ENCODE measurements at regions of chr19 and their contacts with region 1.

Region 1: DNA sequence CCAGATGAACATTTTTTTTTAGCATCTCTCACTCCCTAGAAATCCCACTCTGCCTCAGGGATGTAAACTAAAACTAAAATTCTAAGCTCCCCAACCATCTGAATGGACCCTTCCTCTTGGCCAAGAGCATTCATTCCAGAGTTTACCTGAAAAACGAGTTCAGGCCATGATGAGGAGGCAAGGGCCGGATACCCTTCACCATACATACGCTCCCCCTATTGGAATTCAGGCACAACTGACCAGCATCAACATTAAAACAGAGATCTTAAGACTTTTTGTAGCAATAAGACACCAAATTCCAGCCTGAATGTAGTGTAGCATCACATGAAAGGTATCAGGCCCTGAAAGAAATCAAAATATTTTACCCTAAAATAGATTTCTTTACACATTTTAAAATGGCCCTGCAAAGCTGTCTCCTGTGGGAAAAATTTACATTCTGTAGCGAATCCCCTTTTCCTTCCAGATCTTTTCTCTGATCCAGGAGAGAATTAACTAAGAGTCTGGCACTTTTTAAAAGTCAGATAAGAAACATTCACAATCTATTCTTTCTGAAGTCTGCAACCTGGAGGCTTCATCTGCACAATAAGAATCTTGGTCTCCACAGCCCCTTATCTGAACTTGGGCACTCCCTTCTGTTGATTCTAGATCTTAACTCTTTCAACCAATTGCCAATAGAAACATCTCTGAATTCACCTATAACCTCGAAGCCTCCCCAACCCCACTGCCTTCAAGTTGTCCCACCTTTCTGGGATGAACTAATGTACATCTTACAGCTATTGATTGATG is 888.5 kb downstream of the UQCRFS1 start:
- DNase-seq: no peak
- H3K4me3 ChIP-seq: no peak overlapping the region
- H3K27ac ChIP-seq: no peak overlapping the region
- H3K4me1 ChIP-seq: no peaks in the 10 kb centered on the region
- H3K27me3 ChIP-seq: no peaks in the 10 kb centered on the region
- CTCF ChIP-seq: peak in 1 of 2 donors; percentile 4

Region 2: DNA sequence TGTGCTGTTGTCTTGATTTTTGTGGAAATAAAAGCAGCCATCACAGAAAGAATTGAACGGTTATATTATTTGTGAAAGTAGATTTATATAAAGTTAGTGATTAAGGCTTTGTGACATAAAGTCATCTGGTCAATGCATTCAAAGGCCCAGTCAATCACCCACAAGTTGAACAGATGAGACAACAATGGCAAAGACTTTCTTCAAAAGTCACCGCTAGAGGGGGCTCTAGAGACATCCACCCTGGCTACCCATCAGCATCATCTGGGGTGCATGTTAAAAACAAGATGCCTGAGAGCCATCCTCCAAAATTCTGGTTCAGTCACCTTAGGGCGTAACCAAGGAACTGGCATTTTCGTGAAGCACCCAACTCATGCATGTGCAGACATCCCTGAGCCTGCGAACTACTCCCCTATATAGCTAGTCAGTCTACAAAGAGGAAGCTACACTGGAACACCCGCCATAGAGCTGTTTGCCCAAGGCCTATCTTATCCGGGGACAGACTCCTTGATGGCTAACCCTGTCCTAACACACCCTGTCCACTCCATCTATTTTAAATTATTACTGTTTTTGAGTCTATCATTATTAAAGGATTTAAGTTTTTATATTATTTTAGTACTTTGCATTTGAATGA is 82.1 kb before region 1 on chr19:
- CTCF ChIA-PET with region 1: no interaction called
- dilution Hi-C with region 1: no loop called
- in situ Hi-C with region 1: loop called in 1 of 2 experiments (anchors 10 kb)
- intact Hi-C with region 1: loop called (anchors 1 kb)
- DNase-seq: peak; percentile 2
- H3K4me3 ChIP-seq: no peak overlapping the region
- H3K27ac ChIP-seq: no peak overlapping the region
- H3K4me1 ChIP-seq: no peaks in the 10 kb centered on the region
- H3K27me3 ChIP-seq: no peaks in the 10 kb centered on the region
- CTCF ChIP-seq: peak; percentile 62 to 78

Region 3: DNA sequence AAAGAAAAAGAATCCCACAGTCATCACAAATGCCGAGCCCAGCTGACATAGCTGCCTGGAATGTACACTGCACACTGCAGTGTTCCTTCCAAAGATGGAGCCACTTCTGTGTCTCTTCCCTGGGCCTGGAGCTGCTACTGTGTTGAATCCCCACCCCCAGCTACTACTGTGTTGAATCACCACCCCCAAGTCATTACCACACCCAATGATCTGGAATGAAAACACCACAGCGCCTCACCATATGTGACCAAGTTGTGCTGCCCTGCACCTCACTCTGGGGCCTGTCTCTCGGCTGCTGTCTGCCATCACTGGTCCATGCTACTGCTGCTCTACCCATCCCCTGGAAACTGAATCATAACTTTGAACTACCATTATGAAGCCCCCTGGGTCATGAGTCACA is 27.3 kb after region 1 on chr19:
- CTCF ChIA-PET with region 1: no interaction called
- dilution Hi-C with region 1: no loop called
- in situ Hi-C with region 1: no loop called
- intact Hi-C with region 1: no loop called
- DNase-seq: peak; percentile 20
- H3K4me3 ChIP-seq: no peak overlapping the region
- H3K27ac ChIP-seq: no peak overlapping the region
- H3K4me1 ChIP-seq: no peaks in the 10 kb centered on the region
- H3K27me3 ChIP-seq: no peaks in the 10 kb centered on the region
- CTCF ChIP-seq: no peak

Region 4: GRCh38 chr19:28705008-28705407 is 380.5 kb after region 1 on chr19:
- CTCF ChIA-PET with region 1: no interaction called
- dilution Hi-C with region 1: no loop called
- in situ Hi-C with region 1: no loop called
- intact Hi-C with region 1: loop called (anchors 5 kb)
- DNase-seq: peak; percentile 83
- H3K4me3 ChIP-seq: no peak overlapping the region
- H3K27ac ChIP-seq: peak overlapping the region; percentile 52
- H3K4me1 ChIP-seq: peaks cover 32% of the 10 kb centered on the region
- H3K27me3 ChIP-seq: no peaks in the 10 kb centered on the region
- CTCF ChIP-seq: peak; percentile 60 to 82

Measured in mammary epithelial cell (primary cell).